Activated naive CD4-positive, alpha-beta T cell treated with anti-CD3 and anti-CD28 coated beads, Interleukin-2, amount 10 ng/mL, durations not matched to agents 7 days and 5 days (primary cell): ENCODE measurements at regions of chr10 and their contacts with region 1.

Region 1: DNA sequence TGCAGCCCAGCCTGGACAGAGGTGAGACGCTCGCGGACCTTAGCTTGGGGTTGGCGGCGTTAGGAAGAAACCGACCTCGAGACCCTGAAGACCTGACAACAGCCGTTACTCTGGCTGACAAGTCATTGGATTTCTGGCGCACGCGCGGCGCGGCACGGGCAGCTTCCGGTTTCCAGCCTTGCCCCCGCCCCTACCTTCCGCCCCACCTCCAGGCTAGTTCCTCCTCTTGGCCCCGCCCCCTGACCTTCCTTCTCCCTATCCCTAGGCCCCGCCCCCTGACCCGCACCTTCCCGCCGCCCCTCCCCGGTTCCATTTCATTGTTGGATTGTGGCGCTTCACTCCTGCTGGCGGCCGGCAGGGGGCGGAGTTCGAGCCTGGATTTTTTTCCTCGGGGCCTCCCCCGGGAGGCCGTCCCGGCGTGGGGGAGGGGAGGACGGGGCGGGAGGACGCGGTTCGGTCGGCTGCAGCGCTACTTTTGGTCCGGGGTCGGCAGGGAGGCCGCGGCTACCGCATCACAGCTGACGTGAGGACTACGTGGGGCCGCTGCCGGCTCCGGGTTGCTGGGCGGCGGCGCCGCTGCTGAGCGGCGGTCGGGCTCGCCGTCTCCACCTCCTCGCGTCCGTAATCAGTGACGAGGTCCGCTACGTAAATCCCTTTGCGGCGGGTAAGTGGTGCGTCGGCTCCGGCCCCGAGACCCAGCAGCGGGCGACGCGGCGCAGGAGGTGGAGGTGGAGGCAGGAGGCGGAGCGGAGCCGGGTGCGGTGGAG is at the start of gene CREM:
- DNase-seq: peak; percentile 100
- H3K4me3 Mint-ChIP-seq: peak within 1 kb of the TSS; percentile 86
- H3K27ac Mint-ChIP-seq: peak within 1 kb of the TSS; percentile 96
- H3K4me1 Mint-ChIP-seq: peaks cover 55% of the 10 kb centered on the region
- H3K27me3 Mint-ChIP-seq: no peaks in the 10 kb centered on the region

Region 2: GRCh38 chr10:35074266-35074665 is 52.4 kb before region 1 on chr10:
- CTCF ChIA-PET with region 1: no interaction called
- DNase-seq: no peak
- H3K4me3 Mint-ChIP-seq: no peak overlapping the region
- H3K27ac Mint-ChIP-seq: no peak overlapping the region
- H3K4me1 Mint-ChIP-seq: no peaks in the 10 kb centered on the region
- H3K27me3 Mint-ChIP-seq: no peaks in the 10 kb centered on the region

Region 3: GRCh38 chr10:35092851-35093250 is 33.9 kb before region 1 on chr10:
- CTCF ChIA-PET with region 1: no interaction called
- DNase-seq: no peak
- H3K4me3 Mint-ChIP-seq: no peak overlapping the region
- H3K27ac Mint-ChIP-seq: no peak overlapping the region
- H3K4me1 Mint-ChIP-seq: peaks cover 27% of the 10 kb centered on the region
- H3K27me3 Mint-ChIP-seq: peaks cover 22% of the 10 kb centered on the region

Region 4: GRCh38 chr10:35208536-35208935 is 81.8 kb after region 1 on chr10:
- CTCF ChIA-PET with region 1: interaction called, 12 read pairs
- DNase-seq: peak; percentile 74
- H3K4me3 Mint-ChIP-seq: peak overlapping the region; percentile 60
- H3K27ac Mint-ChIP-seq: peak overlapping the region; percentile 96
- H3K4me1 Mint-ChIP-seq: peaks cover 71% of the 10 kb centered on the region
- H3K27me3 Mint-ChIP-seq: no peaks in the 10 kb centered on the region

Region 5: DNA sequence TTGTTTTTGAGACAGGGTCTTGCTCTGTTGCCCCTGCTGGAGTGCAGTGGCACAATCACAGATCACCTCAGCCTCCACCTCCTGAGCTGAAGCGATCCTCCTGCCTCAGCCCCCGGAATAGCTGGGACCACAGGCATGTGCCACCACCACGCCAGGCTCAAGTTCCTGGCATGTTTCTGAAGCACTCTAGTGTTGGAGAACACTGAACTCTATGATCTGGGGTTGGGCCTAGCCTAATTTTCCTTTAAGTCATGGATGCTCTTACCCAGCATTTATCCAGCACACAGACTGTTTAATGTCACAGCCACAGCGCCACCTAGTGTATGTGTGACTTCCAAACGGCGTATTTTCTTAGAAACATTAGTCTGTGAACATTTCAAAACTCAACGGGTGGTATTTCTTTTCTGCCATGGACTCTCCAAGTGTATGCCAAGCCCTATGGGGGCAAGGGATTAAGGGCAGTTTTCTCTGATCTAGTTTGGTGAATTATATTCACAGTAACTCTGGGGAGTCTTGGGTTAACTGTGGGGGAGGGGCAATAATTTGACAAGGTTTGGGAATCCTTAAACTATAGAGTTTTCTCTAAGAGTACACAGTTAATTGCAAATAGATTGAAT is 91.7 kb after region 1 on chr10:
- CTCF ChIA-PET with region 1: interaction called, 54 read pairs
- DNase-seq: peak; percentile 91
- H3K4me3 Mint-ChIP-seq: no peak overlapping the region
- H3K27ac Mint-ChIP-seq: peak overlapping the region; percentile 71
- H3K4me1 Mint-ChIP-seq: peaks cover 40% of the 10 kb centered on the region
- H3K27me3 Mint-ChIP-seq: peaks cover 6% of the 10 kb centered on the region